Activated T-helper 1 cell treated with anti-CD3 and anti-CD28 coated beads, Interleukin-12 subunit alpha, Interleukin-12 subunit beta, Interleukin-2, Interleukin-4 antibody, amounts not matched to agents 30 ng/mL and 10 ng/mL and 1 ng/mL, durations not matched to agents 14 hours and 24 hours and 36 hours (primary cell): ENCODE measurements at regions of chr2 and their contacts with region 1.

Region 1: GRCh38 chr2:36597532-36598377 is at the start of gene FEZ2:
- DNase-seq: peak; percentile 73
- H3K4me3 Mint-ChIP-seq: peak within 1 kb of the TSS; percentile 93
- H3K27ac Mint-ChIP-seq: peak within 1 kb of the TSS; percentile 89
- H3K4me1 Mint-ChIP-seq: peaks cover 29% of the 10 kb centered on the region
- H3K27me3 Mint-ChIP-seq: peaks cover 5% of the 10 kb centered on the region
- total RNA-seq, gene FEZ2: 14.0 and 14.9 TPM in 2 replicates

Region 2: GRCh38 chr2:36403675-36404230 is 194.0 kb before region 1 on chr2:
- intact Hi-C with region 1: no loop called
- DNase-seq: no peak
- H3K4me3 Mint-ChIP-seq: no peak overlapping the region
- H3K27ac Mint-ChIP-seq: no peak overlapping the region
- H3K4me1 Mint-ChIP-seq: no peaks in the 10 kb centered on the region
- H3K27me3 Mint-ChIP-seq: peaks cover 5% of the 10 kb centered on the region

Region 3: DNA sequence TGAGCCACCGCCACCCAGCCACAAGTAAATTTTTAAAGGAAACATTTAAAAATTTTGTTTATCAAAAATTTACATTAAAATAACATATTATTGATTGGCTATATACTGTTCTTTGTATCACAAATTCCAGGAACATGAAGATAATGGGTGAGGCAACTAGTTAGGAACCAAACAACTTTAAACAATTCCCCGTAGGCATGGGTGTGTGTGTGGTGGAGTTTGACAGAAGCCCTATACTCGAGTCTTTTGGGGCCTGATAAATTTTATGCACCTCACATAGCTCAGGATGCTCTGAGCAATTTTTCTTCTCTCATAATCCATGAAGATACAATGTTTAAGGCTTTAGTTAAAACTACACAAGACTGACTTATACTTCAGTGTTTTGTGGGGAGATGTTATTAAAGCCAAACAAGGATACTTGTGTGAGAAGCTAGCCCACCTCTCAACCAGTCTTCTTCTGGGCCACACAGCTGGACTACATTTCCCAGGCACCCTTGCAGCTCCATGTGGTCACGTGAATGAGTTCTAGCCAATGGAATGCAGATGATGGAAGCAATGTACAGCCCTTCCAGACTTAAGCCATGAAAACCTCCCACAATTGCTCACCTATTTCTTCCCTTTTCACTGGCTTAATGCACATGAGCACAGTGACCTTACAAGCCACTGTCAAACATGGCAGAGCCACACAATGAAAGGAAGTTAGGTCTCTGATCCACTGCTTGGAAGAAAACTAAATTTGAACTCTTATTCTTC is 20.4 kb after region 1 on chr2:
- intact Hi-C with region 1: loop called (anchors 1 kb)
- DNase-seq: no peak
- H3K4me3 Mint-ChIP-seq: no peak overlapping the region
- H3K27ac Mint-ChIP-seq: no peak overlapping the region
- H3K4me1 Mint-ChIP-seq: no peaks in the 10 kb centered on the region
- H3K27me3 Mint-ChIP-seq: peaks cover 10% of the 10 kb centered on the region

Region 4: DNA sequence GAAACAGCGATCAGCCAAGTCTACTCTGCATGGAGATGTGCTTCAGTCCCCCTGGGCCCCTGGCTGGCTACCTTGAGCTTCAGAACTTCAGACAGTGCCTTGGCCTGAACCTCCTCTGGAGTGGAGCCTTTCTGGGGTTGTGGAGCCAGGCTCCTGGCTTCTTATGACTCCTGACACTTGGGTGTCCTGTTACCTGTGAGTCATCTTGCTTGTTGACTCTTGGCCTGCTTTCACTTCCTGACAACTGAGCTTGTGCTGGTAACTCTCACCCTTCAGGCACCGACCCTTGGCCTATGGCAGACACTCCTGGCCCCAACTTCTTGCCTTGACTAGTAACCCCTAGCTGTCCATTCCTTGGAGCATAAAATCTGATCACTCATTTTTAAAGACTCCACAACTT is 52.3 kb after region 1 on chr2:
- intact Hi-C with region 1: no loop called
- DNase-seq: no peak
- H3K4me3 Mint-ChIP-seq: no peak overlapping the region
- H3K27ac Mint-ChIP-seq: no peak overlapping the region
- H3K4me1 Mint-ChIP-seq: no peaks in the 10 kb centered on the region
- H3K27me3 Mint-ChIP-seq: peaks cover 10% of the 10 kb centered on the region

Region 5: GRCh38 chr2:36707050-36707449 is 109.3 kb after region 1 on chr2:
- intact Hi-C with region 1: no loop called
- DNase-seq: no peak
- H3K4me3 Mint-ChIP-seq: no peak overlapping the region
- H3K27ac Mint-ChIP-seq: no peak overlapping the region
- H3K4me1 Mint-ChIP-seq: no peaks in the 10 kb centered on the region
- H3K27me3 Mint-ChIP-seq: no peaks in the 10 kb centered on the region

Region 6: GRCh38 chr2:36717603-36718266 is 120.0 kb after region 1 on chr2:
- intact Hi-C with region 1: no loop called
- DNase-seq: no peak
- H3K4me3 Mint-ChIP-seq: no peak overlapping the region
- H3K27ac Mint-ChIP-seq: no peak overlapping the region
- H3K4me1 Mint-ChIP-seq: no peaks in the 10 kb centered on the region
- H3K27me3 Mint-ChIP-seq: peaks cover 2% of the 10 kb centered on the region